ENCODE measurements at regions of chr2 and their contacts with region 1.

Region 1: GRCh38 chr2:204325468-204325867 is 219.8 kb upstream of the PARD3B start:
- DNase-seq: peak; percentile 89 to 90
- H3K4me3 ChIP-seq: no peak overlapping the region
- H3K4me3 Mint-ChIP-seq: no peak overlapping the region
- H3K27ac Mint-ChIP-seq: peak overlapping the region; percentile 56
- H3K4me1 ChIP-seq: peaks cover 4% of the 10 kb centered on the region
- H3K4me1 Mint-ChIP-seq: peaks cover 28% of the 10 kb centered on the region
- H3K27me3 ChIP-seq: no peaks in the 10 kb centered on the region
- H3K27me3 Mint-ChIP-seq: no peaks in the 10 kb centered on the region
- CTCF ChIP-seq: peak; percentile 76 to 89

Region 2: GRCh38 chr2:204145263-204145751 is 180.2 kb before region 1 on chr2:
- CTCF ChIA-PET with region 1: no interaction called
- POLR2A ChIA-PET with region 1: no interaction called
- intact Hi-C with region 1: loop called (anchors 5 kb)
- DNase-seq: peak; percentile 84 to 90
- H3K4me3 ChIP-seq: peak overlapping the region; percentile 45
- H3K4me3 Mint-ChIP-seq: peak overlapping the region; percentile 75
- H3K27ac Mint-ChIP-seq: peak overlapping the region; percentile 73
- H3K4me1 ChIP-seq: peaks cover 4% of the 10 kb centered on the region; the same call in 1 of the 2 replicates
- H3K4me1 Mint-ChIP-seq: no peaks in the 10 kb centered on the region
- H3K27me3 ChIP-seq: no peaks in the 10 kb centered on the region; the same call in 1 of the 2 replicates
- H3K27me3 Mint-ChIP-seq: peaks cover 19% of the 10 kb centered on the region
- CTCF ChIP-seq: peak; percentile 90 to 97

Region 3: DNA sequence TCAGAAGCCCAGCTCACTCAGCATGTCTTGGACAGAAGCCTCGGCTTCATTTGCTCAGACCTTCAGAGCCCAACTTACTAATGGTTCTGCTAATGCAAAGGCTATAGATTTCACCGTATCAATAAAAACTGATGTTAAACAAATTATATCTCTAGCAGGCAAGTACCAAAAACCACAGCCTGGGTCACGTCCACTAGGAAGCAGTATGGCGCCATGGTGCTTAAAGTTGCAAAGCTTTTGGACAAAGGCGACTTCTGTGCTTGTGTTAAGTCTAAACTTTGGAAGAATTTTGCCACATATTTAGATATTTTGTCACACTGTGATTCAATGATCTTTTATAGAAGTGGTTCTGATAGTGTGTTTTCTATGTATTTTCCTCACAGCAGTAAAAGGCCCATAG is 57.0 kb before region 1 on chr2:
- CTCF ChIA-PET with region 1: no interaction called
- POLR2A ChIA-PET with region 1: no interaction called
- intact Hi-C with region 1: no loop called
- DNase-seq: no peak
- H3K4me3 ChIP-seq: no peak overlapping the region
- H3K4me3 Mint-ChIP-seq: no peak overlapping the region
- H3K27ac Mint-ChIP-seq: no peak overlapping the region
- H3K4me1 ChIP-seq: no peaks in the 10 kb centered on the region
- H3K4me1 Mint-ChIP-seq: no peaks in the 10 kb centered on the region
- H3K27me3 ChIP-seq: no peaks in the 10 kb centered on the region
- H3K27me3 Mint-ChIP-seq: no peaks in the 10 kb centered on the region
- CTCF ChIP-seq: peak in 1 of 2 experiments; percentile 20

Region 4: DNA sequence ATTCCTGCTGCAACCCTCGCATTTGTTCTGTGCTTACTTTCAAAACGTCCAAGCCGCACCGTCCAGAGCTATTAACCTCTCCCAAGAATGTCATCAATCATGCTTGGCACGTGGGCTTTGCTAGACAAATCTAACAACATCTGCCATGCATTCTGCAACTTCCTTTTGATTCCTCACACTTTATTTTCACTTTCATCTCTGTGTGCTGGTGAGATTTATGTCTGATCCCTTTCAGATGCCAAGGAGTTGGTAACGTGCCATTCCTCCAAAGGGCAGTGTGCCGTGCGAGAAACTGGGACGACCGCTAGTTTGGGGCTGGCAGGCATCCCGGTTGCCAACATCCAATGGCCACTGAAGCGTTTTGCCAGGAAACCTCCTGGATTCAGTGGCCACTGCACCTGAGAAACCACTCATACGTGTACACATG is 10.2 kb before region 1 on chr2:
- CTCF ChIA-PET with region 1: no interaction called
- POLR2A ChIA-PET with region 1: no interaction called
- intact Hi-C with region 1: no loop called
- DNase-seq: peak; percentile 46 to 55
- H3K4me3 ChIP-seq: no peak overlapping the region
- H3K4me3 Mint-ChIP-seq: no peak overlapping the region
- H3K27ac Mint-ChIP-seq: no peak overlapping the region
- H3K4me1 ChIP-seq: no peaks in the 10 kb centered on the region; the same call in 1 of the 2 replicates
- H3K4me1 Mint-ChIP-seq: peaks cover 5% of the 10 kb centered on the region
- H3K27me3 ChIP-seq: no peaks in the 10 kb centered on the region
- H3K27me3 Mint-ChIP-seq: no peaks in the 10 kb centered on the region
- CTCF ChIP-seq: no peak

Region 5: GRCh38 chr2:204545023-204545860 is 219.8 kb after region 1 on chr2 and contains the start of gene PARD3B:
- CTCF ChIA-PET with region 1: no interaction called
- POLR2A ChIA-PET with region 1: no interaction called
- intact Hi-C with region 1: loop called (anchors 1 kb)
- DNase-seq: peak; percentile 89 to 91
- H3K4me3 ChIP-seq: peak within 1 kb of the TSS; percentile 69
- H3K4me3 Mint-ChIP-seq: peak within 1 kb of the TSS; percentile 99
- H3K27ac Mint-ChIP-seq: peak within 1 kb of the TSS; percentile 99
- H3K4me1 ChIP-seq: peaks cover 39% of the 10 kb centered on the region
- H3K4me1 Mint-ChIP-seq: peaks cover 27% of the 10 kb centered on the region
- H3K27me3 ChIP-seq: no peaks in the 10 kb centered on the region
- H3K27me3 Mint-ChIP-seq: no peaks in the 10 kb centered on the region
- CTCF ChIP-seq: no peak
- total RNA-seq, gene PARD3B: 66.5 and 68.9 TPM in 2 replicates

Region 6: DNA sequence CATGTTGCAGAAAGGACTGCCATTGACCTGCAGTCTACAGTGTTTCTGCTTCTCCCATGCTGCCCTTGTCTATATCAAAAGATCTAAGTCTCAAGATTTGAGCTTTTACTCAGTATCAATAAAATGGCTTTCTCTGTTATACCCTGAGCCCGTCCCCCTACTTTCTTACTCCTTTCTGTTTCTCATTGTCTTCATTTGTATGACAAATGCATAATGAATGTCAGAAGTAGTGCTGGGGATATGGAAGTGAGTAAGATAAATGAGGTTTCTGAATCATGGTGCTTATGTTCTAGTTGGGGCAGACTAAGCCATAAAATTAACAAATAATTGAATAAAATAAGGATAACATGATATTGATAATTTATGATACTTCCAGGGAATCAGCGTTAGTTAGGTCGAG is 348.4 kb after region 1 on chr2:
- CTCF ChIA-PET with region 1: no interaction called
- POLR2A ChIA-PET with region 1: no interaction called
- intact Hi-C with region 1: loop called (anchors 5 kb)
- DNase-seq: no peak
- H3K4me3 ChIP-seq: no peak overlapping the region
- H3K4me3 Mint-ChIP-seq: no peak overlapping the region
- H3K27ac Mint-ChIP-seq: peak overlapping the region; percentile 6
- H3K4me1 ChIP-seq: peaks cover 44% of the 10 kb centered on the region
- H3K4me1 Mint-ChIP-seq: peaks cover 43% of the 10 kb centered on the region
- H3K27me3 ChIP-seq: no peaks in the 10 kb centered on the region
- H3K27me3 Mint-ChIP-seq: no peaks in the 10 kb centered on the region
- CTCF ChIP-seq: no peak

Region 7: DNA sequence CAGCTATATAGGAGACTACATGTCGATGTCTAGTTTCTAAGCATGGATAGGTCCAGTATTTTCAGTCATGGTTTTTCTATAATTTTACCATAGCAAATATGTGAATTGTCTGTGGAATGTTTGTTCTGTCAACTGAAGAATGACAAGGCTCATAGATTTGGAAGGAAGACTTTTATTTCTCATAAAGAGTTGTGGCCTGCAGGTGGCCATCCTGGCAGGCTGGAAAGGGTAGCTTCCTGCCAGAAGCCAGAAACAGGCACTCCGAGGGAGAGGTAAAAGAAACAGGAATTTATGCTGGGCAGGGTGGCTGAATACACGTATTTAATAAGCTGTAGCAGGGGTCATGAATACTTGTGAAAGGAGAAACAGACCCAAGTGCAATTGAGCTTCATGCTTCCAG is 401.9 kb after region 1 on chr2:
- CTCF ChIA-PET with region 1: no interaction called
- POLR2A ChIA-PET with region 1: no interaction called
- intact Hi-C with region 1: loop called (anchors 1 kb)
- DNase-seq: peak; percentile 37 to 42
- H3K4me3 ChIP-seq: no peak overlapping the region
- H3K4me3 Mint-ChIP-seq: peak overlapping the region; percentile 28
- H3K27ac Mint-ChIP-seq: peak overlapping the region; percentile 85
- H3K4me1 ChIP-seq: peaks cover 21% of the 10 kb centered on the region
- H3K4me1 Mint-ChIP-seq: peaks cover 31% of the 10 kb centered on the region
- H3K27me3 ChIP-seq: no peaks in the 10 kb centered on the region
- H3K27me3 Mint-ChIP-seq: no peaks in the 10 kb centered on the region
- CTCF ChIP-seq: peak in 1 of 2 experiments; percentile 23

Region 8: DNA sequence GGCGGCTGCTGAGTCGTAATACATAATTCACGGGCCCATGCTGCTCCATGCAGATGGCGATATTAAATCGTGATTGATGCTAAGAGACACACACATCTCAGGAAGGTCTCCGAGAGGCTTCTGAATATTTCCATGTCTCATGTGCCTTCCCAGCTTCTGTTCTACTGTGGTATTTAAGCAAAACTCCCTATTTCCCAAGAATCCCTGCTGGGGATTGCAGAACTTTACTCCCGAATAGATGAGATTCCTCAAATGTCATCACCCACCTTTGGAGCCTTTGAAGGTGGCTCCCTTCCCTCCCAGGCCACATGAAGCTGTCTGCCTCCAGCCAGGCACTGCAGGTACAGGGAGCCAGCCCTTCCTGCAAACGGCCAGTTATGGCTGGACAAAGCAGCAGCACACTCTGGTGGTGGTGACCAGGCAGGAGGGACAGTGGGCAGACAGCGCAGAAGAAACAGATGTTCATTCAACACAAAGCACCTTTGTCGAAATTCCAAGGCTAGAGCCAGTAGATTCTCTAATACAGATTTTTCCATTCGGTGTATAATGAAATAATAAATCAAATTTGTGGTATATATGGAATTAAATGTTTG is 1371.0 kb after region 1 on chr2:
- CTCF ChIA-PET with region 1: no interaction called
- POLR2A ChIA-PET with region 1: no interaction called
- intact Hi-C with region 1: loop called (anchors 5 kb)
- DNase-seq: peak; percentile 81 to 85
- H3K4me3 ChIP-seq: no peak overlapping the region
- H3K4me3 Mint-ChIP-seq: no peak overlapping the region
- H3K27ac Mint-ChIP-seq: peak overlapping the region; percentile 43
- H3K4me1 ChIP-seq: peaks cover 57% of the 10 kb centered on the region
- H3K4me1 Mint-ChIP-seq: peaks cover 50% of the 10 kb centered on the region
- H3K27me3 ChIP-seq: no peaks in the 10 kb centered on the region
- H3K27me3 Mint-ChIP-seq: no peaks in the 10 kb centered on the region
- CTCF ChIP-seq: peak; percentile 60 to 85